Heart right ventricle (tissue), 16 donors: ENCODE measurements at regions of chr4 and their contacts with region 1.

Region 1: GRCh38 chr4:142120921-142121320 is 484.5 kb downstream of the IL15 start:
- DNase-seq: no peak
- ATAC-seq: no peak
- H3K4me3 ChIP-seq: no peak overlapping the region
- H3K27ac ChIP-seq: no peak overlapping the region
- H3K4me1 ChIP-seq: peaks cover 0 to 8% (median 0%) of the 10 kb centered on the region in 9 donors
- H3K27me3 ChIP-seq: no peaks in the 10 kb centered on the region
- CTCF ChIP-seq: no peak

Region 2: DNA sequence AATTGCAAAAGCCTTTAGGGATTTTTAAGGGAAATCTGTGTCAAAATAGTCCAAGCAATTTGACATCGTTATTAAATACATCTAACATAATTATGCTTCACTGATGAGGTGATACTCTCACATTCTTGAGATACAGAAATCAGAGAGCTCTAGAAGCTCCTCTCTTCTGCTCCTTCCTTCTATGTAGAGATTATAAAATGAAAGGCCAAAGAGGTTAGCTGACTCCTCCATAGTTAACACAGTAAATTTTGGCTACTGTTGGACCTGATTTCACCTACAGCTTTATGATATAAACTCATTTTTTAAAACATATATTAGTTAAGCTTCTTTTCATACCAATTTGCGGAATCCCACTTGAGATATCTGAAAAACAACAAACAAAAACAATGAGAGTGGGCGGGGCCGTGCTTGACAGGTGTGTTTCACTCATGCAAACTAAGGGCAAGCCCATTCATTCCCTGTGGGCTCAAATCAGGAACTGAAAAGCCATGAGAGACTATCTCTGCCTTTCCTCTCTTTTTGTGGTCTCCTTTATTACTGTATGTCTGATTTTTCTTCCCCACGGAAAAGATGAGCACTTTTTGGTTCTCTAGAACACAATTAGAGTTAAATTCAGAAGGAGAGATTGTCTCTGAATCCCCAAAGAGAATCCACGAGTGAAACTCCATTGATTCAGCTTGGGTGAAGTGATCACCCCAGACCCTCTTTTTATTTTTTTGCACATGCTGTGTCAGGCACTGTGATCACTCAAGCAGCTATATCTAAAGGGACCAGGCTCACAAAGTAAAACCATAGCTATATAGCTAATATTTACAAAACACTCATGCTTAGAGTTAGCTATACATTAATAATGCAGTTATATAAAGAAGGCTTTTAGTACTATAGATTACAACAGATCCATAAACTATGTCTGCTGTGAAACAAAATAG is 81.7 kb after region 1 on chr4:
- intact Hi-C with region 1: no loop called
- DNase-seq: no peak
- ATAC-seq: no peak
- H3K4me3 ChIP-seq: no peak overlapping the region
- H3K27ac ChIP-seq: no peak overlapping the region
- H3K4me1 ChIP-seq: peaks cover 0 to 16% (median 0%) of the 10 kb centered on the region in 9 donors
- H3K27me3 ChIP-seq: no peaks in the 10 kb centered on the region
- CTCF ChIP-seq: no peak

Region 3: GRCh38 chr4:142728233-142728632 is 607.3 kb after region 1 on chr4:
- intact Hi-C with region 1: loop called in 5 of 10 experiments (anchors 5 to 10 kb)
- DNase-seq: no peak
- ATAC-seq: no peak
- H3K4me3 ChIP-seq: no peak overlapping the region
- H3K27ac ChIP-seq: no peak overlapping the region
- H3K4me1 ChIP-seq: no peaks in the 10 kb centered on the region
- H3K27me3 ChIP-seq: no peaks in the 10 kb centered on the region
- CTCF ChIP-seq: no peak